Activated CD8-positive, alpha-beta T cell treated with anti-CD3 and anti-CD28 coated beads, Interleukin-2, amount 10 ng/mL, durations not matched to agents 7 days and 5 days (primary cell): ENCODE measurements at regions of chr1 and their contacts with region 1.

Region 1: DNA sequence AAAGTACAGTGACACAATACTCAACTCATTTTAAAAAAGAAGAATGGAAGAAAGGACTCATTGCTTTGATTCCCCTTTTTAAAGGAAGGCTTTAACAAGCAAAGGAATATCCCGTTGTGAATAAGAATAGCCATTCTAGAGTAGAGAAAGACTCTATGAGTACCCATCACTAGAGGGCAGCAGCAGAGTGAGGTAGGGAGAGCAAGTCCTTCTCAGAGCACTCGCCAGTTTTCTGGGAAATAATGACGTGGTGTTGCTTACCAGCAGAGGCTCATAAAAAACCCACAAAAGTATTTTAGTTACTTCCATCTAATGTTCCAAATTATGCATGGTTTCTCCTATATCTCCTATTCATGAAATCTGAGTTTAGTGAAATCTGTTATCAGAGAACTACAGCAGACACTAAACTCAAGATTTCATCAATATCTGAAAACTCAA is 74.6 kb downstream of the USP24 start:
- DNase-seq: peak; percentile 88
- ATAC-seq: peak; percentile 94
- H3K4me3 Mint-ChIP-seq: no peak overlapping the region
- H3K27ac Mint-ChIP-seq: peak overlapping the region; percentile 24
- H3K4me1 Mint-ChIP-seq: peaks cover 16% of the 10 kb centered on the region
- H3K27me3 Mint-ChIP-seq: no peaks in the 10 kb centered on the region

Region 2: DNA sequence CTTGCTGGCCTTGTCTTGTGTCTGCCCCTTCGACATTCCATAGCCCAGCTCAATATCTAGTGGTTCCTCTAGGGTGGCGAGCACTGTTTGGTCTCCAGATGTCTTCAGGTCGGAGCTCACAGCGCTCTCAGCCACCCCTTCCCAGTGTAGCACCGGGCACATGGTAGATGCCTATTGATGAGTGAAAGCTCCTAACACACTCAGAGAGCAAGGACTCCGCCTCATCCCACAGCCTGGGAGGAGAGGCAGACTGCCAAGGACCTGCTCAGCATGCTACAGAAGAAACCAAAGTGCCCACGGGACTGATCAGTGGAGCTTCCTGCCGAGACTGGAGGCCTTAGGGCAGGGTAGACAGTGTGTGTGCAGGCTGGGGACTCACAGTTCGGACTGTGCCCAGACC is 90.3 kb before region 1 on chr1:
- CTCF ChIA-PET with region 1: no interaction called
- POLR2A ChIA-PET with region 1: no interaction called
- DNase-seq: no peak
- ATAC-seq: no peak
- H3K4me3 Mint-ChIP-seq: no peak overlapping the region
- H3K27ac Mint-ChIP-seq: no peak overlapping the region
- H3K4me1 Mint-ChIP-seq: no peaks in the 10 kb centered on the region
- H3K27me3 Mint-ChIP-seq: no peaks in the 10 kb centered on the region

Region 3: DNA sequence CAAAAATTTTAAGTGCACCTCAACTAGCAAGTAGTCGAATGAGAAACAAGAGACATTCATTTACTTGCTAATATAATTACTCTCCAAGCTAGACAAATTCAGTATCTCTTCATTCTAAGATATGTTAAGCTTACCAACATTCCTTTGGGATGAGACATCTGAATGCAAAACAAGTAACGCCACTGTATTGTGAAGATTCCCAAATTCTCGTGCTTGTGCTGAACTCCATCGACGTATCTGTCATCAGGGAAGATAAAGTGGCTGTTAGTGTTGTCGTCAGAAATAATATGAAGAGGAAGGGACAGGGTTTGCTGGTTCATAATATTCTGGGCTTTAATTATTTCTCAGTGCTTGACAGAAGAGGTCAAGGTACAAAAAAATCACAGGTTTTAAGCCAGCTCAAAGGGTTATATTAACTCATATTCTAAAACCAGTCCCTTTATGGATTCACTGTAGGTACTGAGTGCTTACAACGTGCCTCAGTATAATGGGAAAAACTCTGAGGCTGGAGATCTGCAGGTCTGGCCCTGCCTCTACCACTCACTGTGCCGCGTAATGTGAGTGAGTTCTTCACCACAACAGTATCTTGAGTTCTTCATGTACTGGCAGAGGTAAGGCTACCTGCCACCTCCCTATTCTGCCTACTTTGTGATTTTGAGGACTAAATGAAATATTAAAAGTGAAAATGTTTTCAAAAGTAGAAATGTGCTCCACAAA is 59.2 kb before region 1 on chr1:
- CTCF ChIA-PET with region 1: no interaction called
- POLR2A ChIA-PET with region 1: no interaction called
- DNase-seq: no peak
- ATAC-seq: no peak
- H3K4me3 Mint-ChIP-seq: no peak overlapping the region
- H3K27ac Mint-ChIP-seq: no peak overlapping the region
- H3K4me1 Mint-ChIP-seq: no peaks in the 10 kb centered on the region
- H3K27me3 Mint-ChIP-seq: no peaks in the 10 kb centered on the region

Region 4: GRCh38 chr1:55129194-55129728 is 11.3 kb before region 1 on chr1:
- CTCF ChIA-PET with region 1: interaction called, 10 read pairs
- POLR2A ChIA-PET with region 1: no interaction called
- DNase-seq: no peak
- ATAC-seq: no peak
- H3K4me3 Mint-ChIP-seq: no peak overlapping the region
- H3K27ac Mint-ChIP-seq: no peak overlapping the region
- H3K4me1 Mint-ChIP-seq: peaks cover 13% of the 10 kb centered on the region
- H3K27me3 Mint-ChIP-seq: no peaks in the 10 kb centered on the region

Region 5: DNA sequence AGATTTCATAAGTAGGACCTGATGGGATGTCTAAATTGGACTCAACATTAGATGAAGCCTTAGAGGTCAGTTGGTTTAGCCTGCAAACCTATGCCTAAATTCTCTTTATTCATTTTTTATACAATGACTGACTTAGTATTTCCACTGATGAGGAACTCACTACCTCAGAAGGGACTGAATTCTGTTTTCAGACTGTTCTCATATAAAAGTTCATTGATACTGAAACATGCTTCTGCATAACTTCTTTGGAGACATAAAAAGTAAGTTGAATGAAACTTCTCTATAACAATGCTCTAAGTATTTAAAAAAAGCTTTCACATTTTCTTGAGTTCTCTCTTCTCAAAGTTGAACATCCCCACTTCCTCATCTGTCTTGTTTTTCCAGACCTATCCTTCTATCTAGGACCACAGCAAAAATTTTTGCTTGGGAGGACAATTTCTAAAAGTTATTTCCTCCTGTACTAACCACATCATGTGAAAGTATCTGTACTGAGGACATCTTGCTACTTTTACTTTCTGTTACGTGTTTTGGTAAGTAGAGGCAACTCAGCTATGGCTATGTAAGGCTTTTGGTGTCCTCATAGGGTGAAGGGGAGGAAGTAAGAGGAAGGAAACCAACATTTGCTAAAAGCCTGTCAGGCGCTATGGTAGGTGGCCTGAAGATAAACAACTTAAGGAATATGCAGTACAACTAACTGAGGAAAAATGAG is 10.5 kb after region 1 on chr1:
- CTCF ChIA-PET with region 1: interaction called, 10 read pairs
- POLR2A ChIA-PET with region 1: no interaction called
- DNase-seq: peak; percentile 37
- ATAC-seq: peak; percentile 98
- H3K4me3 Mint-ChIP-seq: peak overlapping the region; percentile 60
- H3K27ac Mint-ChIP-seq: peak overlapping the region; percentile 86
- H3K4me1 Mint-ChIP-seq: peaks cover 28% of the 10 kb centered on the region
- H3K27me3 Mint-ChIP-seq: no peaks in the 10 kb centered on the region

Region 6: GRCh38 chr1:55215256-55216021 is 74.9 kb after region 1 on chr1 and contains the start of gene USP24:
- CTCF ChIA-PET with region 1: interaction called, 31 read pairs
- POLR2A ChIA-PET with region 1: interaction called, 3 read pairs
- DNase-seq: peak; percentile 85
- ATAC-seq: peak; percentile 88
- H3K4me3 Mint-ChIP-seq: peak within 1 kb of the TSS; percentile 95
- H3K27ac Mint-ChIP-seq: peak within 1 kb of the TSS; percentile 98
- H3K4me1 Mint-ChIP-seq: peaks cover 58% of the 10 kb centered on the region
- H3K27me3 Mint-ChIP-seq: no peaks in the 10 kb centered on the region
- total RNA-seq, gene USP24: 36.7 to 44.1 TPM